ENCODE measurements at regions of chr17 and their contacts with region 1.

Region 1: DNA sequence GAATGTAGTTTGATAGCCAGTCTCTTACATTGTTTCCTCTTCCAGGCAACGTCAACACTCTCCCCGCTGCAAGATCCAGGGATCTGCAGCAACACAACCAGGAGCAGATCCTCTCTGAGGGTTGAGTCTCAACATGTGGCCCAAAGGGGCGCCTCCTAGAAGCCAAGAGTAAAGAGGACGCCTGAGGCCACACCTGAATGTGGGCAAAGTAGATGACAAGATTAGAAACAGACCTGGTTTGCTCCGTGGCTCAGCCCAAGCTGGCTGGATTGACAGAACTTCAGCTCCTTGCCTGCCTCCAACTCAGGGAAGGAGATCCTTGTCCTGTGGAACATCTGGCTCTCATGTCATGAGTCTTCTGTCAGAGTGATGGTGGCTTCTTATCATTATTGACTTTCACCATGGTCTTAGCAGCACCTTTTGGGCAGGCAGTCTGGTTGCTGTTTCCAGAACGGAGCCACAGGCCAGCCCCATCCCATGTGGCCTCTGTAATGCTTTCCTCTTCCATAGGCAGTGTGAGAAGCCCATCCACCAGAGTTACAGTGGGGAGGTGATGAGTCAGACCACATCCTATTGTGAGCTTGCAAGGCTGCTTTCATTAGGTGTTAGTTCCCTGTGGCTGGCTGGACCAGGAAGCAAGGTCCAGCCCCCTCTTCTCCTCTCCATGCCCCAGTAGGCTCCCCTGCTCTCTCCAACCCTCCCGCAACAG is 31.0 kb upstream of the SPACA3 start:
- DNase-seq: no peak
- ATAC-seq: no peak
- H3K4me3 ChIP-seq: no peak overlapping the region
- H3K27ac ChIP-seq: no peak overlapping the region
- H3K4me1 ChIP-seq: no peaks in the 10 kb centered on the region
- H3K27me3 ChIP-seq: peaks cover 5% of the 10 kb centered on the region
- CTCF ChIP-seq: no peak

Region 2: GRCh38 chr17:32944248-32945010 is 16.2 kb before region 1 on chr17:
- CTCF ChIA-PET with region 1: no interaction called
- POLR2A ChIA-PET with region 1: no interaction called
- in situ Hi-C with region 1: no loop called
- intact Hi-C with region 1: no loop called
- DNase-seq: no peak
- ATAC-seq: no peak
- H3K4me3 ChIP-seq: no peak overlapping the region
- H3K27ac ChIP-seq: no peak overlapping the region
- H3K4me1 ChIP-seq: no peaks in the 10 kb centered on the region
- H3K27me3 ChIP-seq: peaks cover 13% of the 10 kb centered on the region
- CTCF ChIP-seq: no peak

Region 3: DNA sequence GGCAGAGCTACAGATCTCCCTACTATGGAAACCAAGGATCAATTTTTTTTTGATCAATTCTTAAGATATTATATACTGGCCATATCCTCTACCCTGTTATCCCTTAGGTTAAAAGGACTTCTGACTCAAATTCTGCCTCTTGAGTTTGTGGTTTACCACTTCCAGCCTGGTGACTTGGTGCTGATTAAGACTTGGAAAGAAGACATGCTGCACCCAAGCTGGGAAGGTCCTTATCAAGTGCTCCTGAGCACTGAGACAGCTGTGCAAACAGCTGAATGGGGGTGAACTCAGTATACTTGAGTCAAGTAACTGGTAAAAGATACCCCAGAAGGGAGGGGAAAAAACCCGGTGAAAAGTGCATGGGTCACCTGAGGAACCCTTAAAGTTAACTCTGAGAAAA is 10.5 kb after region 1 on chr17:
- CTCF ChIA-PET with region 1: no interaction called
- POLR2A ChIA-PET with region 1: no interaction called
- in situ Hi-C with region 1: no loop called
- intact Hi-C with region 1: loop called (anchors 1 kb)
- DNase-seq: no peak
- ATAC-seq: no peak
- H3K4me3 ChIP-seq: no peak overlapping the region
- H3K27ac ChIP-seq: no peak overlapping the region
- H3K4me1 ChIP-seq: no peaks in the 10 kb centered on the region
- H3K27me3 ChIP-seq: no peaks in the 10 kb centered on the region
- CTCF ChIP-seq: no peak

Region 4: DNA sequence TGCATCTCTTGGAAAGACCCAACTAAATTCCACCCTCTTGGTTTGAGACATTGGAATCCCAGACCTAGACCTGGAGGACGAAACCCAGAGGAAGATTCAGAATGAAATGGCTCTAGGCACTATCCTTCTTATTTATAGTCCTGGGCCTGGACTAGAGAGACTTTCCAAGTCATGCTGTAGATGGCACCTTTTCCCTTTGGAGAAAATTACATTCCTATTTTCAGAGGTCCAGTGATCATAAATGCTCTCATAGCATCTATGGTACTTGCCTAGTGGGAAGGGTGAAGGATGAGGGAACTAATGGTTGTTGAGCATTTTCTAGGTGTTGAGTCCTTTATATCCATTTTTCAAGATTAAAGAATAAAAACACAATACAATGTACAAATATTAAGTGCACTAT is 68.1 kb after region 1 on chr17:
- CTCF ChIA-PET with region 1: no interaction called
- POLR2A ChIA-PET with region 1: interaction called, 12 read pairs
- in situ Hi-C with region 1: no loop called
- intact Hi-C with region 1: no loop called
- DNase-seq: no peak
- ATAC-seq: 0 out of 2 replicates have a peak, but pooled peaks have one; percentile 66
- H3K4me3 ChIP-seq: no peak overlapping the region
- H3K27ac ChIP-seq: no peak overlapping the region
- H3K4me1 ChIP-seq: no peaks in the 10 kb centered on the region
- H3K27me3 ChIP-seq: no peaks in the 10 kb centered on the region
- CTCF ChIP-seq: 0 out of 2 replicates have a peak, but pooled peaks have one; percentile 41

Region 5: DNA sequence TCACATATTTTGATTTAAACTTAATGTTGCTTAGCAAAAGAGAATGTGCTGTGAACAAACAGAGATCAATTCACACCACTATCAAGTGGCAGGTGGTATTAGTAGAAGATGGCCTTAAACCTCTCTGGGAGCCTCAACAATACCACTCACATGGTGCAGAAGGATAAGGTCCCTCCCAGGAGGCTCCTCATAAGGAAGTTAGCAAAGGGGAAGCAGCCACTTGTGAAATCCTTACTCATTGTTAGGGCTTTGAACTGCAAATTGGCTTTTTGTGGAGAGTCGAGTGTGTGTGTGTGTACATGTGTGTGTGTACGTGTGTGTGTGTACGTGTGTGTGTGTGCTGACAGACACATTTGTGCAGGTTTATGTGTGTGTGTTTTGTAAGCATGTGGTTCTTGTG is 381.4 kb after region 1 on chr17:
- CTCF ChIA-PET with region 1: interaction called, 10 read pairs
- POLR2A ChIA-PET with region 1: no interaction called
- in situ Hi-C with region 1: no loop called
- intact Hi-C with region 1: no loop called
- DNase-seq: no peak
- ATAC-seq: no peak
- H3K4me3 ChIP-seq: no peak overlapping the region
- H3K27ac ChIP-seq: no peak overlapping the region
- H3K4me1 ChIP-seq: no peaks in the 10 kb centered on the region
- H3K27me3 ChIP-seq: peaks cover 31% of the 10 kb centered on the region
- CTCF ChIP-seq: no peak

Measured in Panc1 (cell line).